Activated CD4-positive, alpha-beta memory T cell treated with anti-CD3 and anti-CD28 coated beads for 36 hours (primary cell): ENCODE measurements at regions of chr4 and their contacts with region 1.

Region 1: GRCh38 chr4:89469930-89470375 is 162.4 kb upstream of the GPRIN3 start:
- DNase-seq: peak; percentile 37
- H3K4me3 Mint-ChIP-seq: peak overlapping the region; percentile 14
- H3K27ac Mint-ChIP-seq: peak overlapping the region; percentile 49
- H3K4me1 Mint-ChIP-seq: peaks cover 26% of the 10 kb centered on the region
- H3K27me3 Mint-ChIP-seq: no peaks in the 10 kb centered on the region

Region 2: GRCh38 chr4:89434364-89434988 is 35.5 kb before region 1 on chr4:
- CTCF ChIA-PET with region 1: interaction called, 3 read pairs
- POLR2A ChIA-PET with region 1: no interaction called
- intact Hi-C with region 1: loop called (anchors 1 kb)
- DNase-seq: no peak
- H3K4me3 Mint-ChIP-seq: no peak overlapping the region
- H3K27ac Mint-ChIP-seq: no peak overlapping the region
- H3K4me1 Mint-ChIP-seq: peaks cover 12% of the 10 kb centered on the region
- H3K27me3 Mint-ChIP-seq: no peaks in the 10 kb centered on the region

Region 3: DNA sequence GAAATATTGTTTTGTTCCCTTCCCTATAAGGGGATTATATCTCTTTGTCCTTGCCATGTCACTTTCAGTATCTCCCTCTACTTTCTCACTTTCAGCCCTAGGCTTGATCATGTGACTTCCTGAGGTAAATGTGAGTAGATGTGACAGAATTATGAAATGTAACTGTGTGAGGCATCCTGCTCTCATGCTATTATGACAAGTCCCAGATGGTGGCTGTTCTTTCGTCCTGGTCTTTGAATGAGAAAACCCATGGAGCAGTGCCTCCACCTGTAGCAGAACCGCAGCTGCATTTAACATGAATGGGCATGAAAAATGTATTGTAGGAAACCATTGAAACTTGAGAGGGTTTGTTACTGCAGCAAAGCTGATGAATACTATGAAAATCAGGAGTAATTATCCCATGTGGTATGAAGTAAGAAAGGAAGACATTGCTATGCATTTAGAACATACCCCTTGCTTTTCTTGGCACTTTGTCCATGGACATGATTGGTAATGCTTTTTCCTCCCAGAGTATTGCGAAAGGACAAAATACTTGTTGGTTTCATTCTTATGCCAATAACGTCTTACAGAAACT is 39.8 kb after region 1 on chr4:
- CTCF ChIA-PET with region 1: interaction called, 3 read pairs
- POLR2A ChIA-PET with region 1: no interaction called
- intact Hi-C with region 1: loop called (anchors 1 kb)
- DNase-seq: peak; percentile 32
- H3K4me3 Mint-ChIP-seq: no peak overlapping the region
- H3K27ac Mint-ChIP-seq: peak overlapping the region; percentile 15
- H3K4me1 Mint-ChIP-seq: peaks cover 16% of the 10 kb centered on the region
- H3K27me3 Mint-ChIP-seq: peaks cover 8% of the 10 kb centered on the region

Region 4: DNA sequence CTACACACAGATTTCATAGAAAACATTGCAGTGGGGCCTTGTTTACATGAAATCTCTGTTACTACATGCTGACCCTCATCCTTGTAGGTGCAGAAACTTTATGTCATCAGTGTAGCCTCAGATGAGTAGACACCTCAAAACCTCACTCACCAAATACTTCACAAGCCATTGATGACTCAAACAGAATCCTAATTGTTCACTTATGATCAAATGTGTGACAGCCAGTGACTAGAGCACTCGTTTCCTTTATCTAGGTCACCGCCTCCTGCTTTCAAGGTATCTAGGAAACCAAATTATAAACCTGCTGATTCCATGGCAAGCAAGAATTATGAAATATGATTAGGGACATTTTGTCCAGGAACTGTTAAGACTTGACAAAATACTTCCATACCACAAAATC is 93.5 kb after region 1 on chr4:
- CTCF ChIA-PET with region 1: no interaction called
- POLR2A ChIA-PET with region 1: no interaction called
- intact Hi-C with region 1: loop called (anchors 1 kb)
- DNase-seq: no peak
- H3K4me3 Mint-ChIP-seq: no peak overlapping the region
- H3K27ac Mint-ChIP-seq: no peak overlapping the region
- H3K4me1 Mint-ChIP-seq: peaks cover 9% of the 10 kb centered on the region
- H3K27me3 Mint-ChIP-seq: peaks cover 1% of the 10 kb centered on the region

Region 5: DNA sequence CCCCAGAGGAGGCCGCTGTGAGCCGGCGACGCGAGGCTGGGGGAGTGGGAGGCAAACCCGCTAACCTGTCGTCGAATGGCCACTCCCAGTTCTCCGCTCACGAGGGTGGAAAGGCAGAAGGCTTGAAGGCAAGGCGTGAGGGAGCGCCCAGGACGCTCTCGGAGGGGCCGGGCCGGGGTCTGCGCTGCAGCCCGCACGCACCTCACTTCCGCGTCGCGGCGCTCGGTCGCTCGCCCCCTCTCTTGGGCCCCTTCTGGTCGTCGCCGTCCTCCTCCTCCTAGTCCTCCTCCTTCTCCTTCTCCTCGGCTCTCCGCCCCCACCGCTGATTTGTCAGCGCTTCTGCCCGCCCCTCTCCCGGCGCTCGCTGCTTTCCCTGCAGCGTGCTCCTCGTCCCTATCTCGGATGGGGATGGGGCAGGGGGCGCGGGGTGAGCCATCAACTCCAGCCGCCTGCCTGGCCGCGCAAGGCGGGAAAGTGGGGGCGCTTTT is 367.0 kb after region 1 on chr4 and contains the start of gene SNCA:
- CTCF ChIA-PET with region 1: no interaction called
- POLR2A ChIA-PET with region 1: no interaction called
- intact Hi-C with region 1: loop called (anchors 10 kb)
- DNase-seq: peak; percentile 71
- H3K4me3 Mint-ChIP-seq: peak within 1 kb of the TSS; percentile 74
- H3K27ac Mint-ChIP-seq: no peak within 1 kb of the TSS
- H3K4me1 Mint-ChIP-seq: peaks cover 22% of the 10 kb centered on the region
- H3K27me3 Mint-ChIP-seq: peaks cover 46% of the 10 kb centered on the region
- total RNA-seq, gene SNCA: 2.0 to 2.5 TPM